ENCODE measurements at regions of chr16 and their contacts with region 1.

Region 1: GRCh38 chr16:4506450-4506849 is 30.3 kb downstream of the HMOX2 start:
- DNase-seq: no peak
- ATAC-seq: peak; percentile 77

Region 2: DNA sequence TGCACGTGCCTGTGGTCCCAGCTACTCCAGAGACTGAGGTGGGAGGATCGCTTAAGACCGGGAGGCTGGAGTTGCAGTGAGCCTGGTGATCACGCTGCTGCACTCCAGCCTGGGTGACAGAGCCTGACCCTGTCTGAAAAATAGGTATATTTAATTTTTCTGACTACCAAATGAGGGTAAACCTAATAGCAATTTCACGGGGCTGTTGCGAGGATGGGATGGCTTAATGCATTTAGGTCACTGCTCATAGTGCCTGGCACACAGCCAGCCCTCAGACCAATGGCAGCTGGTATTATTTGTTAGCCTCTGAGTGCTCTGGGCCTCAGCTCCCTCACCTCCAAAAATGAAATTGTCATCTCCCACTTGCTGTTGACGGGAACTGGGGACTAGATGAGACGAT is 38.0 kb after region 1 on chr16:
- intact Hi-C with region 1: loop called (anchors 5 kb)
- DNase-seq: no peak
- ATAC-seq: no peak